CD4-positive, alpha-beta T cell (primary cell): ENCODE measurements at regions of chr6 and their contacts with region 1.

Region 1: GRCh38 chr6:158644231-158645063 is at the start of gene DYNLT1:
- DNase-seq: peak; percentile 73 to 92 (median 84)
- ATAC-seq: peak; percentile 63
- H3K4me3 ChIP-seq: peak within 1 kb of the TSS; percentile 82
- H3K4me3 Mint-ChIP-seq: peak within 1 kb of the TSS; percentile 100
- H3K27ac ChIP-seq: peak within 1 kb of the TSS; percentile 85 to 93
- H3K27ac Mint-ChIP-seq: peak within 1 kb of the TSS; percentile 97
- H3K4me1 ChIP-seq: peaks cover 53% of the 10 kb centered on the region
- H3K4me1 Mint-ChIP-seq: peaks cover 67% of the 10 kb centered on the region
- H3K27me3 ChIP-seq: no peaks in the 10 kb centered on the region
- H3K27me3 Mint-ChIP-seq: no peaks in the 10 kb centered on the region
- CTCF ChIP-seq: no peak
- total RNA-seq, gene DYNLT1: 170 to 182 TPM

Region 2: DNA sequence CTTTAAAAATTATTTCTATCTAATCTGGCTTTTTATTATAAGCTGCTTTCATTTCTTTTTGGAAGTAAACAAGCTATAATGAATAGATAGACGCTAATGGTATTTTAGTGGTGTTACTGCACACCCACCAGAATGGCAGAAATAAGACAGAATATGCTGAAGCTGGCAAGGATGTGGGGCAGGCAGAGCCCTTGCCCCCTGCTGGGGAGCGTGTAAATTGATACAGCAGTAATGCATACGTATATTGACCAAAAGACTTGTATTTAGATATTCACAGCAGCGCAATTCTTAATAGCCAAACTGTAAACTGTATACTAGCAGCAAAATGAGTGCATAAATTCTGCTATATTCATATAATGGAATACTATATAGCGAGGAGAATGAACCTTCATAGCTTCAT is 49.2 kb before region 1 on chr6:
- CTCF ChIA-PET with region 1: no interaction called
- POLR2A ChIA-PET with region 1: no interaction called
- intact Hi-C with region 1: no loop called
- DNase-seq: peak in 5 of 14 experiments; percentile 9 to 51 (median 30)
- ATAC-seq: peak; percentile 71
- H3K4me3 ChIP-seq: no peak overlapping the region
- H3K4me3 Mint-ChIP-seq: no peak overlapping the region
- H3K27ac ChIP-seq: no peak overlapping the region
- H3K27ac Mint-ChIP-seq: peak overlapping the region; percentile 8
- H3K4me1 ChIP-seq: no peaks in the 10 kb centered on the region
- H3K4me1 Mint-ChIP-seq: no peaks in the 10 kb centered on the region
- H3K27me3 ChIP-seq: no peaks in the 10 kb centered on the region
- H3K27me3 Mint-ChIP-seq: no peaks in the 10 kb centered on the region
- CTCF ChIP-seq: peak; percentile 50

Region 3: DNA sequence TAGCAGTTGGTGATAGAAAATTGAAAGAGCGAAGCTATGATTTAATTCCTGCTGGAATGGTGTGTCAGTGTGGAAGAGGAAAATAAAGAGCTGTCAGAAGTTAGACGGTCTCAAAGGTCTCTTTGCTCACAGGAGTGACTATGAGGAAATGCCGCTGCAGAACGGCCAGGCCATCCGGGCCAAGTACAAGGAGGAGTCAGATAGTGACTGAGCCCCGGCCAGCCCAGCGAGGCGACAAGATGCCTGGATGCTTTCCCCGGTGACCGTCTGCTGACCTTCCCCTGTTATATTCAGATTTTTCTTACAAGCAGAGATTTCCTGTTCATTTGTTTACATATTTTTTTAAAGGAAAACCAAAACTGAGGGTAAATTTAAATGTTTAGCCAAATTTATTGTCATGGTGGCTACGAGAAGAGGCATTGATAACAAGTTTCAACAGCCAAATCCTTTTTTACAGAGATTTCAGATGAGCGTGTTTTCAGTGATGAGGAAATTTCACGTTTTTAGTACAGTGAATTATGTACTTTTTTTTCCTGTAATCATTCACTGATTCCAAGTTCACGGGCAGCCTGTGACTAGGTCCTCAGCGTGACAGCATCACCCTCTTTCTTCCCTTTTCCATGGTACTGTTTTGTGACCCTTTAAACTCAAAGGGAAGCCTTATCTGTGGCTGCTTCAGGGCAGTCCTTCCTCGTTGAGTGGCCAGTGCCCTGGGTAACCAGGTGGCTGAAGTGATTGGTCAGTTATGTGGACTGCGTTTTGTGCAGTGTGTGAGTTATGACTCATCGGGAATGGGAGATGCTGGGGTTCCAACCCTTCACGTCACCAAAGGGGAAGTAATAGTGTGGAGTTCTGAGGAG is 12.5 kb before region 1 on chr6:
- CTCF ChIA-PET with region 1: interaction called, 5 read pairs
- POLR2A ChIA-PET with region 1: interaction called, 14 read pairs
- intact Hi-C with region 1: loop called in 1 of 2 experiments (anchors 1 kb)
- DNase-seq: peak in 2 of 14 experiments; percentile 44 to 52
- ATAC-seq: no peak
- H3K4me3 ChIP-seq: no peak overlapping the region
- H3K4me3 Mint-ChIP-seq: no peak overlapping the region
- H3K27ac ChIP-seq: peak overlapping the region; percentile 15 to 26
- H3K27ac Mint-ChIP-seq: peak overlapping the region; percentile 79
- H3K4me1 ChIP-seq: peaks cover 29% of the 10 kb centered on the region
- H3K4me1 Mint-ChIP-seq: peaks cover 49% of the 10 kb centered on the region
- H3K27me3 ChIP-seq: no peaks in the 10 kb centered on the region
- H3K27me3 Mint-ChIP-seq: no peaks in the 10 kb centered on the region
- CTCF ChIP-seq: no peak

Region 4: DNA sequence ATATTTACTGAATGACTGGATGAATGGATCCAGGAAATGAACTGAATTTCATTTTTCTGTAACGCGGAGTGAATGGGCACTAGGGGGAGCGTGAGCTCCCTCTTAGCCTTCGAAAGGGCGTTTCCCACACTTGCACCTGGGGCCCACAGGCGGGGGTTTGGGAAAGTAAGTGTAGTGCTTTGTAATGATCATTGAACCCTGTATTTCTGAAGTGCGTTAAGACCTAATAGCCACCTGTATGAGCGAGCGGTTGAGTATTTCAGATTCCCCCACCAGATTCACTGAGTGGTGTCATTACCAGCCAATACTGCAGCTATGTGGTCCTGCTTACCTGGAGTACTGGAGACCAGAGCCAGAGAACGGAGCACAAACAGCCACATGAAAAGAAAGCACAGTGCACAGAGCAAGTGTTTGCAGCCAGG is 15.9 kb after region 1 on chr6:
- CTCF ChIA-PET with region 1: interaction called, 14 read pairs
- POLR2A ChIA-PET with region 1: interaction called, 71 read pairs
- intact Hi-C with region 1: no loop called
- DNase-seq: peak in 13 of 14 experiments; percentile 25 to 83 (median 53)
- ATAC-seq: peak; percentile 81
- H3K4me3 ChIP-seq: no peak overlapping the region
- H3K4me3 Mint-ChIP-seq: peak overlapping the region; percentile 38
- H3K27ac ChIP-seq: no peak overlapping the region
- H3K27ac Mint-ChIP-seq: peak overlapping the region; percentile 84
- H3K4me1 ChIP-seq: peaks cover 32% of the 10 kb centered on the region
- H3K4me1 Mint-ChIP-seq: peaks cover 52% of the 10 kb centered on the region
- H3K27me3 ChIP-seq: no peaks in the 10 kb centered on the region
- H3K27me3 Mint-ChIP-seq: no peaks in the 10 kb centered on the region
- CTCF ChIP-seq: peak; percentile 83